ENCODE measurements at regions of chr12 and their contacts with region 1.

Region 1: DNA sequence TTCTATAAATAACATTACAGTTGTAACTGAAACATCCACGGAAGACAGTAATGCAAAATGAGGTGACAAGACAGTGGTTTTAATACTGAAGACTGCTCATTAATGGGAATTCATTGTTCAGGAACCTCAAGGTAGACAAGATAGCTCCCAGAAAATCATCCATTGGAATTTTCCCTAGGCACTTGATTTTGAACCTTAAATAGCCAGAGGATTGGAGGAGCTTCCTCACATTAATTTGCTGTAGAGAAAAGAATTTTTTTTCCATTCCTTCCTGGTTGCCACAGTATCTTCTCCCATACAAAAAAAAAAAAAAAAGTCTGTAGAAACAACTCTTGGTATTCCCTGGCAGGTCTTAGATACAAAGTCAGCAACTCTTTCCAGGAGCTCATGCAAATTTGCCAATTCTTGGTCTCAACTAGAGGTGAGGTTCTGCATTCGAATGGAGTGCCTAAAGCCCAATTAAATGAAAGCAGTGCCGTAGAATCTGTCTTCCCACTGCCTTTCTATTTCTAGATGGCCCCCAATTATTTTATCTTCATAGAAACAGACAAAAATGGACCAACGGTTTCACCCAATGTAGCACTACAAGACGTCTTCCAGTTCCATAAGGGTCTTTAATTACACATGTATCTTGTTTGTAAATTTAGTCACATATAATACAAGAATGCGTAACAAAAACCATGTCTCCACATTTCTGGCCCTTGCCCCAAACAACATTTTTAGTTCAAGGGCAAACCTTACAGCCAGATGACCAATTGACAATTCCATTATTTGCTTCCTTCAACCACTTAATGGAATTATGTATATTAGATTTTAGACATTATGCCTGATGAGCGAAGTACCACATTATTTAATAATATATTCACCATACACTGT is 13.5 kb downstream of the SLC38A2 start:
- DNase-seq: no peak
- H3K4me3 ChIP-seq: no peak overlapping the region
- H3K27ac ChIP-seq: peak overlapping the region; percentile 10
- H3K4me1 ChIP-seq: peaks cover 9% of the 10 kb centered on the region
- H3K27me3 ChIP-seq: no peaks in the 10 kb centered on the region
- CTCF ChIP-seq: no peak

Region 2: GRCh38 chr12:46382964-46383653 is 24.1 kb after region 1 on chr12:
- CTCF ChIA-PET with region 1: no interaction called
- POLR2A ChIA-PET with region 1: no interaction called
- intact Hi-C with region 1: no loop called
- DNase-seq: peak; percentile 85 to 98
- H3K4me3 ChIP-seq: peak overlapping the region; percentile 92
- H3K27ac ChIP-seq: peak overlapping the region; percentile 97
- H3K4me1 ChIP-seq: peaks cover 39% of the 10 kb centered on the region
- H3K27me3 ChIP-seq: no peaks in the 10 kb centered on the region
- CTCF ChIP-seq: no peak; the same call in 1 of the 2 replicates

Region 3: GRCh38 chr12:46442239-46442638 is 83.2 kb after region 1 on chr12:
- CTCF ChIA-PET with region 1: no interaction called
- POLR2A ChIA-PET with region 1: interaction called, 11 read pairs
- intact Hi-C with region 1: no loop called
- DNase-seq: no peak
- H3K4me3 ChIP-seq: no peak overlapping the region
- H3K27ac ChIP-seq: no peak overlapping the region; the same call in 1 of the 2 replicates
- H3K4me1 ChIP-seq: peaks cover 20% of the 10 kb centered on the region
- H3K27me3 ChIP-seq: no peaks in the 10 kb centered on the region
- CTCF ChIP-seq: no peak

Region 4: GRCh38 chr12:46459111-46459510 is 100.1 kb after region 1 on chr12:
- CTCF ChIA-PET with region 1: no interaction called
- POLR2A ChIA-PET with region 1: no interaction called
- intact Hi-C with region 1: no loop called
- DNase-seq: no peak
- H3K4me3 ChIP-seq: no peak overlapping the region
- H3K27ac ChIP-seq: no peak overlapping the region
- H3K4me1 ChIP-seq: peaks cover 45% of the 10 kb centered on the region
- H3K27me3 ChIP-seq: no peaks in the 10 kb centered on the region
- CTCF ChIP-seq: no peak